Right lobe of liver (tissue), 6 donors: ENCODE measurements at regions of chr1 and their contacts with region 1.

Region 1: DNA sequence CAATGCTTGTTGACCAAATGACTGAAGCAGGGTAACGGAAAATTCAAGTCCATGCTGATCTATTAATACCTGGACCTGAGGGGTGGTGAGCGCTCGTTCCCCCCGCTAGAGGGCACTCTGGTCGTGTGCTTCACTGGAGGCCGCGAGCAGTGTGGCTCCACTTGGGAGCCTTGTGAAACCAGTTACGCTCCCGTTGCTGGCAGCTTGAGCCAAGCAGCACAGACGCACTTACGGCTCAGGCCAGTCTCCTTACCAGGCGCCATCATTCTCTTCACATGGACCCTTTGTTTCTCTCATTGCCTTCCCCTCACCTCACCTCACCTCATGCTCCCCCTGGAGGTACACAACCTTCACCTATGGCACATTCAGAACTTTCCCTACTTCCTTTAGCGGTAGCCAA is 49.7 kb upstream of the TSPAN2 start:
- DNase-seq: peak; percentile 81 to 86 (median 85)
- ATAC-seq: peak; percentile 98 to 100 (median 99)
- H3K4me3 ChIP-seq: no peak overlapping the region
- H3K27ac ChIP-seq: no peak overlapping the region
- H3K4me1 ChIP-seq: no peaks in the 10 kb centered on the region
- H3K27me3 ChIP-seq: no peaks in the 10 kb centered on the region
- CTCF ChIP-seq: peak; percentile 80 to 93 (median 90)
- POLR2A ChIP-seq: no peak

Region 2: GRCh38 chr1:115068826-115069572 is 70.0 kb before region 1 on chr1:
- intact Hi-C with region 1: no loop called
- DNase-seq: no peak
- ATAC-seq: no peak
- H3K4me3 ChIP-seq: no peak overlapping the region
- H3K27ac ChIP-seq: no peak overlapping the region
- H3K4me1 ChIP-seq: no peaks in the 10 kb centered on the region
- H3K27me3 ChIP-seq: no peaks in the 10 kb centered on the region
- CTCF ChIP-seq: no peak
- POLR2A ChIP-seq: no peak

Region 3: GRCh38 chr1:115469703-115470476 is 330.9 kb after region 1 on chr1:
- intact Hi-C with region 1: loop called (anchors 5 to 10 kb)
- DNase-seq: peak; percentile 58 to 66 (median 58)
- ATAC-seq: peak; percentile 82 to 91 (median 86)
- H3K4me3 ChIP-seq: no peak overlapping the region
- H3K27ac ChIP-seq: no peak overlapping the region
- H3K4me1 ChIP-seq: no peaks in the 10 kb centered on the region
- H3K27me3 ChIP-seq: no peaks in the 10 kb centered on the region
- CTCF ChIP-seq: peak; percentile 79 to 94 (median 87)
- POLR2A ChIP-seq: no peak

Region 4: GRCh38 chr1:115595279-115596079 is 456.5 kb after region 1 on chr1:
- intact Hi-C with region 1: loop called (anchors 10 kb)
- DNase-seq: peak; percentile 75 to 79 (median 75)
- ATAC-seq: peak; percentile 89 to 94 (median 90)
- H3K4me3 ChIP-seq: no peak overlapping the region
- H3K27ac ChIP-seq: no peak overlapping the region
- H3K4me1 ChIP-seq: no peaks in the 10 kb centered on the region
- H3K27me3 ChIP-seq: no peaks in the 10 kb centered on the region
- CTCF ChIP-seq: peak; percentile 79 to 93 (median 86)
- POLR2A ChIP-seq: no peak